Dendritic cell treated with granulocyte-macrophage colony-stimulating factor and Interleukin-4, amounts not matched to agents 40 ng/mL and 50 ng/mL, for 4 days (primary cell): ENCODE measurements at regions of chr3 and their contacts with region 1.

Region 1: DNA sequence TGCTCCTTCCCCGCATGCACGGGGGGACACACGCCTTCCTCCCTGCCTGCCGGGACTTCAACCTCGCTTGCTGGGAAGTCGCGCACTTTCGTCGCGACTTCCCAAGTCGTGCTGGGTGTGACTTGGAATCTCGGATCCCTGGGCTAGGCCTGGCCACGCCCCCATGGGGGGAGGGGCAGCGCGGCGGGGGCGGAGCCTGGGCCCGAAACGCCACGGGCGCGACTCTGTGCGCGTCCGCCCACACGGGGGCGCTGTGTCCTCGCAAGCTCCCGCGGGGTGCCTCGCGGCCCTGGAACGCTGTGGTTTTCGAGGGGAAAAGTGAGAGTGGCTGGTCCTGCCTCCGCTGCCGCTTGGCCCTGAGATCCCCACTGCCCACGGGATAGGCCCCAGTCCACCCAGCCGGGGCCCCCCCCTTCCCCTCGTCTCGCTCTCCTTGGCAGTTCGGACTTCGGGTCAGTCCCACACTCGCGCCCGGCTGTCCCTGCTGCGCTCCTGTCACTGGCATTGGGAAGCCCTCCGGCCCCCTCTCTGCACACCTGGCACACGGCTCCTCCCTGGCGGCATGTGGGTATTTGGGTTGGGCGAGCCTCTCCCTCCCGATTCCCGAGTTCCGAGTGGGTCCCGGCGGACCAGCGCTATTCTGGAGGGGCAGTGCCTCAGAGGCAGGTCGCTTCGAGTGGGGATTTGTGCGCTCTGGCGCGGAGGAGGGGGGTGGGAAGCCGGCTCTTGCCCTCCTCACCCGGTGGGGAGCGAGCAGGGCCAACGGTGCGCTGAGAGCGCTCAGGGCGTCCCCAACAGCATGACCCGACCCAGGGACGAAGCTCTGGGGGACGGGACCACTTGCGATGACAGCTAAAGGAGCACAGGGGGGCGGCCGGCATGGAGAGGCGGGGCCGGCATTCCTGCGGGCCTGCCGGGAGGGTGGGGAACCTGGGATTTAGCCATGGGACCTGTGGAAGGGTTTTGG is 23.6 kb downstream of the SEC61A1 start:
- H3K4me3 Mint-ChIP-seq: peak overlapping the region; percentile 77
- H3K27ac Mint-ChIP-seq: peak overlapping the region; percentile 72
- H3K4me1 Mint-ChIP-seq: peaks cover 52% of the 10 kb centered on the region
- H3K27me3 Mint-ChIP-seq: no peaks in the 10 kb centered on the region

Region 2: GRCh38 chr3:128051837-128052594 is 23.8 kb before region 1 on chr3 and contains the start of gene SEC61A1:
- intact Hi-C with region 1: loop called (anchors 1 kb)
- H3K4me3 Mint-ChIP-seq: peak within 1 kb of the TSS; percentile 82
- H3K27ac Mint-ChIP-seq: peak within 1 kb of the TSS; percentile 86
- H3K4me1 Mint-ChIP-seq: peaks cover 39% of the 10 kb centered on the region
- H3K27me3 Mint-ChIP-seq: peaks cover 4% of the 10 kb centered on the region

Region 3: GRCh38 chr3:128123538-128124368 is 48.0 kb after region 1 on chr3 and contains the start of gene RUVBL1:
- intact Hi-C with region 1: loop called (anchors 5 kb)
- H3K4me3 Mint-ChIP-seq: peak within 1 kb of the TSS; percentile 96
- H3K27ac Mint-ChIP-seq: peak within 1 kb of the TSS; percentile 93
- H3K4me1 Mint-ChIP-seq: peaks cover 16% of the 10 kb centered on the region
- H3K27me3 Mint-ChIP-seq: no peaks in the 10 kb centered on the region

Region 4: GRCh38 chr3:128145337-128145736 is 69.5 kb after region 1 on chr3:
- intact Hi-C with region 1: loop called (anchors 5 kb)
- H3K4me3 Mint-ChIP-seq: peak overlapping the region; percentile 68
- H3K27ac Mint-ChIP-seq: peak overlapping the region; percentile 91
- H3K4me1 Mint-ChIP-seq: peaks cover 42% of the 10 kb centered on the region
- H3K27me3 Mint-ChIP-seq: no peaks in the 10 kb centered on the region

Region 5: GRCh38 chr3:128524374-128525299 is 448.8 kb after region 1 on chr3:
- intact Hi-C with region 1: no loop called
- H3K4me3 Mint-ChIP-seq: no peak overlapping the region
- H3K27ac Mint-ChIP-seq: no peak overlapping the region
- H3K4me1 Mint-ChIP-seq: peaks cover 19% of the 10 kb centered on the region
- H3K27me3 Mint-ChIP-seq: peaks cover 1% of the 10 kb centered on the region